Activated CD4-positive, alpha-beta memory T cell treated with anti-CD3 and anti-CD28 coated beads for 36 hours (primary cell): ENCODE measurements at regions of chr11 and their contacts with region 1.

Region 1: DNA sequence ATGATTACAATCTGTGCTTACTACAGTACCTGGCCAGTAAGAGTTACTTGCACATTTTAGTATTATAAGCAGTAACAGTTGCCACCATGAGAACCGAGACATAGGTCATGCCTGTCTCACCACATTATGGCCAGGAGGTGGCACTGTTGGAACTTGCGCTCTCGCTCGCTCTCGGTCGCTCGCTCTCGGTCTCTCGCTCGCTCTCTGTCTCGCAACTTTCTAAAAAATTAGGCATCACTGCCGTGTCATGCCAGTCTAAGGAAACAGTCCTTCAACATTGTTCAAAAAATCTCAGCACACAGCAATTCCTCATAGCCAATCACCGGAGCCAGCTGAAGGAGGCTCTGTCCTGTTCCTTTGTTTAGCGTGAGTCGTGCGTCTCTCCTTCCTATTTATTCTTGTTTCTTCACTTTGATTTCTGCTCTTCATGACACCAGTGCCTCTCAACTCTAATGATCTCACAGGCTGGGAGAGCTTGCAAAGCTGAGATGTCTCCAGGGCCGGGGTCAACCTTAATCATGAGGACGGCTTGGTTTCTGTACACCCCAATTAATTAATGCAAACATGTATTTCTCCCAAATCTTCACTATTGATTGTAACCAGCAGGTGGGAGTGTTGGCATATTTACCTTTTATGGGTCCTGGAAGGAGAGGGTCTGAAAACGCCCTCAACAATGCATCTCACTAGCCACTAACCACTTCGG is 6.3 kb upstream of the ADAMTS8 start:
- DNase-seq: peak; percentile 78
- H3K4me3 Mint-ChIP-seq: no peak overlapping the region
- H3K27ac Mint-ChIP-seq: no peak overlapping the region
- H3K4me1 Mint-ChIP-seq: peaks cover 9% of the 10 kb centered on the region
- H3K27me3 Mint-ChIP-seq: peaks cover 10% of the 10 kb centered on the region

Region 2: DNA sequence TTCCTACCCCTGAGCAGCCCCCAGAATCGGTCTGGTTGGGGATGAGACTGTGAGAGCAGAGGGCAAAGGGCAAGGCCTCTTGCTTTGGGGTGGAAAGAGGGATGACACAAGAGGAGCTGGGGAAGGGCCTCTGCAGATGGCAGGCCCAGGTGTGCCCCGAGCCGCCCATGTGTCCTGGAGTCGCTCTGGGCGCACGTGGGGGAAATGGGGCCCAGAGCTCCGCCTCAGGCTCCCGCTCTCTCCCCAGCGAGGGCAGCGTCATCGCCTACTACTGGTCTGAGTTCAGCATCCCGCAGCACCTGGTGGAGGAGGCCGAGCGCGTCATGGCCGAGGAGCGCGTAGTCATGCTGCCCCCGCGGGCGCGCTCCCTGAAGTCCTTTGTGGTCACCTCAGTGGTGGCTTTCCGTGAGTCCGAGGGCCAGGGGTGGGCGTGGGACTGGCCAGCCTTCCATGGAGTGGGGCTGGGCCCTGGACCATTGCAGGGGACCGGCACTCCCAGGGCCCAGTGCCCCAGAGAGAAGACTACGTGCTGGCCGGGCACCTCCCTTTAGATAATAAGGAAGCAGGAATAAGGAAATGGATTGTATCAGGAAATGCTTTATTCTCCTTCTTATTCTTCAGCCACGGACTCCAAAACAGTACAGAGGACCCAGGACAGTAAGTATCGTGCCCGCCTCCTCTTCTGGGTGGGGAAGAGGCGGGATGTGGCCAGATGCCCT is 245.0 kb before region 1 on chr11:
- CTCF ChIA-PET with region 1: no interaction called
- POLR2A ChIA-PET with region 1: no interaction called
- intact Hi-C with region 1: no loop called
- DNase-seq: no peak
- H3K4me3 Mint-ChIP-seq: no peak overlapping the region
- H3K27ac Mint-ChIP-seq: no peak overlapping the region
- H3K4me1 Mint-ChIP-seq: no peaks in the 10 kb centered on the region
- H3K27me3 Mint-ChIP-seq: no peaks in the 10 kb centered on the region

Region 3: DNA sequence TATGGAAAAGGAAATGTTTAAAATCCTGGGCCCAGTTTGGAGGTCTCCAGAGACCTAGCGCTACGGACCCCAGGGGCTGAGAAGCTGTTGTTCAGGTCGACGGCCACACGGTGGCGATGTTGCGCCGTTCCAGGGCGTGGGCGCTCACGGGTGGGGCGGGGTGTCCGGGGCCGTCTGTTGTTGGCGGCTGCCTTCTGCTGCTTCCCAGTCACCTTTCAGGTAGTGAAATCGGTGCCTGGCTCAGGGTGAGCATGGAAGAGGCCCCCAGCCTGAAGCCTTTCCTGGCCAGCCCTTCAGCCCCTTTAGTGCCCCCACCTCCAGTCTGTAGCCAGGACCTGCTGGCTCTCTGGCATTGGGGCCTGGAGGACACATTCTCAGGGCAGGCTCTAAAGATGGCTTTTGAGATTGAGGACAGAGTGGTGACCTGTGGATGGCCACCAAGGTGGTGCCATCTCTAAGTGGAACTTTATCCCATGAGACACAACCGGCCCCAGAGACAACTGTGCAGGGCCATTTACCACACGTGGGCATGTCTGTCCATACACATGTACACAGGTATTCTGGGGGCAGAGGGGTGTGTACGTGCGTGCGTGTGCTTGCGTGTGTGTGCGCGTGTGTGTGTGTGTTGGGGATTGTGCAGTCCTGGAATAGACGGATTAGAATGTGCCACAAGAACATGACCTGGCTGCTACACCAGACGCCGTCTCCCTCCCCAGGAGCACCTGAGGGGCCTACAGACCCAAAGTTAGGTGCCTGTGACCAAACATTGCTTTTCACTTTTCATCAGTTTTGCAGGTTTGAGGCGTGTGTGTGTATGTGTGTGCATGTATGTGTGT is 221.3 kb before region 1 on chr11:
- CTCF ChIA-PET with region 1: interaction called, 15 read pairs
- POLR2A ChIA-PET with region 1: no interaction called
- intact Hi-C with region 1: loop called (anchors 1 kb)
- DNase-seq: peak; percentile 79
- H3K4me3 Mint-ChIP-seq: no peak overlapping the region
- H3K27ac Mint-ChIP-seq: no peak overlapping the region
- H3K4me1 Mint-ChIP-seq: no peaks in the 10 kb centered on the region
- H3K27me3 Mint-ChIP-seq: no peaks in the 10 kb centered on the region

Region 4: DNA sequence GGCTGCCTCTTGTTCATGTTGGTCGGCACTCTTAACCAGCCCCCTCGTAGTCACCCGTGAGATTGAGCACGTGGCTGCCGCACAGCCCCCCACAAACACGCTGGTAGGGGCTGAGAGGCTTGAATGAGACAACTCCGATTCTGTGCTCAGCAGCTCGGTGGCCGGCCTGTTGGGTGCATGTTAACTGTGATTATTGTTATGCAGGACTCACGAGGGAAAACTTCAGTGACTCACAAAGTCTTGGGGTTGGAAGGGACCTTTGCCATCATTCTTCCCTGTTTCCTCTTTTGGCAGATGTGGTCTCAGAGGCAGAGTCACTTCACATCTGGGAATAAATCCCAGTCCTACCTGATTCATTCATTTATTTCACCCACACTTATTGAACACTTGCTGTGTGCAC is 88.9 kb after region 1 on chr11:
- CTCF ChIA-PET with region 1: no interaction called
- POLR2A ChIA-PET with region 1: no interaction called
- intact Hi-C with region 1: no loop called
- DNase-seq: no peak
- H3K4me3 Mint-ChIP-seq: no peak overlapping the region
- H3K27ac Mint-ChIP-seq: no peak overlapping the region
- H3K4me1 Mint-ChIP-seq: no peaks in the 10 kb centered on the region
- H3K27me3 Mint-ChIP-seq: peaks cover 4% of the 10 kb centered on the region

Region 5: GRCh38 chr11:130666781-130667251 is 232.1 kb after region 1 on chr11:
- CTCF ChIA-PET with region 1: interaction called, 3 read pairs
- POLR2A ChIA-PET with region 1: no interaction called
- intact Hi-C with region 1: loop called (anchors 10 kb)
- DNase-seq: no peak
- H3K4me3 Mint-ChIP-seq: no peak overlapping the region
- H3K27ac Mint-ChIP-seq: no peak overlapping the region
- H3K4me1 Mint-ChIP-seq: no peaks in the 10 kb centered on the region
- H3K27me3 Mint-ChIP-seq: peaks cover 2% of the 10 kb centered on the region

Region 6: GRCh38 chr11:130710497-130711012 is 275.9 kb after region 1 on chr11:
- CTCF ChIA-PET with region 1: no interaction called
- POLR2A ChIA-PET with region 1: no interaction called
- intact Hi-C with region 1: no loop called
- DNase-seq: no peak
- H3K4me3 Mint-ChIP-seq: no peak overlapping the region
- H3K27ac Mint-ChIP-seq: no peak overlapping the region
- H3K4me1 Mint-ChIP-seq: no peaks in the 10 kb centered on the region
- H3K27me3 Mint-ChIP-seq: peaks cover 7% of the 10 kb centered on the region

Region 7: DNA sequence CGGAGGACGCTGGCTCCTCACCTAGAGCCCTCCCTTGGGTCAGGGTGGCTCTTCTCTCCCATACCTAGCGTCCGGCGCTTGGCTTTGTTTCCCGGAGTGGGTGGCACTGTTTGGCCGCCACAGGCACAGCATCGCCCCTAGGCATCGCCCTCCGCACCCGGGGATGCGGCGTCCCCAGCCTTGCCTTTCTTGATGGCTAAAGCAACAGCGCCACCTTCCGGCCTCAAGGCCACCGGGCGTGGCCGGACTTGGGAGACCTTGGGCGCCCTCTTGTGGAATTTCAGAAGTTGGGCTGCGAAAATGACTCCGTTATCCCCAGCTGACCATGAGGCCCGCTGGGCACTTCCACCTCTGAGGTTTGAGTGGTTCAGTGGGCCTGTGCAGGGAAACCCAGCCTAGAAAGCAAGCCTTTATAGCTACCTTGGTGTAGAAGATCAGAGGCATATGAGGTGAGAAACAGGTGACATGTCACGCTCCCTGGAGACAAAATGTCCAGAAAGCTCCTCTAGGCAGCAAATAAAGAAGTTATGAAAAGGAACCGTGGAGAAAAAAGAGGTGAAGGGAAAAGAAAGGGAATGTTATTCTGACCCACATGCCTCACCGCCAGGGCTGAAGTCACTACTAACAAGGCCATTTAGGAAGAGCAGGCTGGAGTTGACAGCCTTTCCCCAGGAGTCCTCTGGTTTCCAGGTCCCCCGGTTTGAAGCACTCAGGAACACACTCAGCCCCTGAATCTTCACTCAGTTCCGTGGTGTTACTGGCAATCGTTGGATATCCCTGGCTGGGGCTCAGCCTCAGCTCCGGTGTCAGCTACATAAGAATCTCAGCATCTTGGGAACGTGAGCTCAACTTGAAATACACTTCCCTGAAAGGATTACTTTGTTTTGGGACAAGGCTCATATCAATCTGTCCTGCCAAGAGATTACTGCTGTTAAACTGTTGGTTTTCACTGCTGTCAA is 427.5 kb after region 1 on chr11:
- CTCF ChIA-PET with region 1: interaction called, 347 read pairs
- POLR2A ChIA-PET with region 1: interaction called, 4 read pairs
- intact Hi-C with region 1: loop called (anchors 1 kb)
- DNase-seq: peak; percentile 89
- H3K4me3 Mint-ChIP-seq: no peak overlapping the region
- H3K27ac Mint-ChIP-seq: no peak overlapping the region
- H3K4me1 Mint-ChIP-seq: peaks cover 3% of the 10 kb centered on the region
- H3K27me3 Mint-ChIP-seq: peaks cover under 1% of the 10 kb centered on the region

Region 8: DNA sequence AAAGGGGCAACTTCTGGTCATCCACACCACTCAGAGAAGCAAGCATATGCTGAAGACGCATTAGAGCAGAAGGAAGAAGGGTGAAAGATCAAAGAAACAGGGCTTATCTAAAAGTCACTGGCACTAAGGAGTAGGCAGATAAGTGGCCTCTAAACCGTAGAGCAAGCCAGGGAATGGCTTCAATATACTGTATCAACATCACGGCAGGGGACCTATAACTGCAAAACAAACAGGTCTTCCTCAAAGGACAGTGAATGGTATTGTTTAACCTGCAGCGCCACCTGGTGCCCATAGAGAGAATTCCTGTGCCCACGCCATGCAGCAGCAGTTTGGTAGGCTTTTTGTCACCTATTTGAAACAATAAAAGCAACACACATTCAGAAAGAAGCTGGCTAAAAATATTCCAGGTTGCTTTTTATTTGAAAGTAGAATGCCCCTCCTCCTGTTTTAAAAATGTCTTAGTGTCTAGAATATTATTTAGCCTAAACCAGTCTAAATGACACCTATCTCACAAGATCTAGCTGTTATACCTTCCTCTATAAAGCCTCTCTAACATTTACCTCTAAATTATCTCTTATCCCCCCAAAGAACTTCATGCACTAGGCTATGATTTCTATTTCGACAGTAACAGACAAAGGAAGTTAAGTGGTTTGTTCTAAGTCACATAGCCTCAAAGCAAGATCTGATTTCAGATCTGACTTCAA is 459.8 kb after region 1 on chr11:
- CTCF ChIA-PET with region 1: interaction called, 24 read pairs
- POLR2A ChIA-PET with region 1: no interaction called
- intact Hi-C with region 1: loop called (anchors 1 kb)
- DNase-seq: peak; percentile 80
- H3K4me3 Mint-ChIP-seq: no peak overlapping the region
- H3K27ac Mint-ChIP-seq: no peak overlapping the region
- H3K4me1 Mint-ChIP-seq: no peaks in the 10 kb centered on the region
- H3K27me3 Mint-ChIP-seq: no peaks in the 10 kb centered on the region